ENCODE measurements at regions of chr7 and their contacts with region 1.

Region 1: DNA sequence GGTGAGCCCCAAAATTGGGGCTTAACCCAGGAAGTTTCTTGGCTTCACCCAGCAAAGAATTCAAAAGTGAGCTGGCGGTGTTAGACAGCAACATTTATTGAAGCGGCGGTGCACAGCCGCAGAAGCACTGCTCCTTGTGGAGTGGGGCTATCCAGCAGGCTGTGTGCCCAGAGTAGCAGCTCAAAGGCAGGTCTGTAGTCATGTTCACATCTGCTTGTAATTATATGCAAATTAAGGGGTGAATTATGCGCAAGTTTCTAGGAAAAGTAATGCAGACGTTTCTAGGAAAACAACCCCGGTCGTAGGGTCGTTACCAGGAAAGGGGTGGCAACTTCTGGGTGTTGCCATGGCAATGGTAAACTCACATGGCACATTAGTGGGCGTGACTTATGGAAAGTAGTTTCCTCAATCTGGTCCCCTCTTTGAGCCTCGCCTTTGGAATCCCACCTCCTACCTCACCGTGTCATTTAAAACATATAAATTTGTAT is 13.7 kb upstream of the KBTBD2 start:
- DNase-seq: peak; percentile 83
- H3K4me3 Mint-ChIP-seq: peak overlapping the region; percentile 80
- H3K27ac Mint-ChIP-seq: peak overlapping the region; percentile 97
- H3K4me1 Mint-ChIP-seq: peaks cover 14% of the 10 kb centered on the region
- H3K27me3 Mint-ChIP-seq: no peaks in the 10 kb centered on the region

Region 2: GRCh38 chr7:32490127-32490822 is 414.9 kb before region 1 on chr7 and contains the start of gene LSM5:
- intact Hi-C with region 1: loop called (anchors 1 kb)
- DNase-seq: peak; percentile 85
- H3K4me3 Mint-ChIP-seq: peak within 1 kb of the TSS; percentile 89
- H3K27ac Mint-ChIP-seq: peak within 1 kb of the TSS; percentile 91
- H3K4me1 Mint-ChIP-seq: peaks cover 24% of the 10 kb centered on the region
- H3K27me3 Mint-ChIP-seq: no peaks in the 10 kb centered on the region
- total RNA-seq, gene LSM5: 79.6 and 84.3 TPM in 2 replicates

Region 3: DNA sequence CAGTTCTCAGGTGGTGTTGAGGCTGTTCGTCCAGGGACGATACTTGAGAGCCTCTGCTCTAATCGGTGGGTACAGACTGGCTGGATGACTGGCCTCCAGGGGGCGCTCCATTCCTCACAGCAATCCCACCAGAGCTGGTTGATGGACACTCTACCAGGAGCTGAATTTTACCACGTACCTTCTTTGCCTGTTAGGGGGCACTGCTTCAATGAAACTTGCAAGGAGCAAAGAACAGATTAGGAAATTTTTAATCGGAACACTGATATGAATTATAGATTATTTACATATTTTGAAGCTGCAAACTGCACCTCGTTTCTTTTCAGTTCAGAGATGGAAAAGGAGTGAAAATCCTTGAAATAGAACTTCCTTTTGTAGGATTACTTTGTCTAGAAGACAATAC is 58.5 kb before region 1 on chr7:
- intact Hi-C with region 1: loop called (anchors 2 kb)
- DNase-seq: peak; percentile 74
- H3K4me3 Mint-ChIP-seq: peak overlapping the region; percentile 19
- H3K27ac Mint-ChIP-seq: no peak overlapping the region
- H3K4me1 Mint-ChIP-seq: peaks cover 11% of the 10 kb centered on the region
- H3K27me3 Mint-ChIP-seq: peaks cover 28% of the 10 kb centered on the region

Region 4: GRCh38 chr7:32942786-32943653 is 37.8 kb after region 1 on chr7:
- intact Hi-C with region 1: loop called (anchors 1 kb)
- DNase-seq: peak; percentile 65
- H3K4me3 Mint-ChIP-seq: peak overlapping the region; percentile 91
- H3K27ac Mint-ChIP-seq: peak overlapping the region; percentile 76
- H3K4me1 Mint-ChIP-seq: peaks cover 29% of the 10 kb centered on the region
- H3K27me3 Mint-ChIP-seq: peaks cover 10% of the 10 kb centered on the region

Measured in activated T-helper 1 cell treated with anti-CD3 and anti-CD28 coated beads, Interleukin-12 subunit alpha, Interleukin-12 subunit beta, Interleukin-2, Interleukin-4 antibody, amounts not matched to agents 30 ng/mL and 10 ng/mL and 1 ng/mL, durations not matched to agents 14 hours and 24 hours and 36 hours (primary cell).